ENCODE measurements at regions of chr10 and their contacts with region 1.

Region 1: GRCh38 chr10:113126229-113127201 is 176.5 kb downstream of the TCF7L2 start:
- DNase-seq: no peak
- H3K4me3 ChIP-seq: peak overlapping the region; percentile 47
- CTCF ChIP-seq: peak; percentile 58

Region 2: DNA sequence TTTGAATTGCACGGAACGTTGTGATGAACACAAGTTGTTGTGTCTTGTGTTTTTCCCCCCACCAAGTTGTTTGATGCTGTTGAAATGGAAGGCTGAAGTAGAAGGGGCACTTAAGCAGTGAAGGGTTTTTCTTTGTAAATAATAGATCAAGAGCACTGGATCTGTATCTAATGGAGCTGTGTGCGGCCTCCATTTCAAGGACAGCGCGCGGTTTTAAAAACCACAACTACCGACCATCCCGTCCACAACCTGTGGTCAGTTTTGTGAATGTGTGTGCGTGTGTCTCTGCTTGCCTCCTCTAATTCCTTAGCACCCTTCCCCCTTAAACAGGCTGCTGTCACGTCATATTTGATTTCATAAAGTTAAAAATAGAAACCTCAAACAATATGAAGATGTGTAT is 11.0 kb before region 1 on chr10:
- CTCF ChIA-PET with region 1: interaction called, 10 read pairs
- POLR2A ChIA-PET with region 1: no interaction called
- DNase-seq: no peak
- H3K4me3 ChIP-seq: no peak overlapping the region
- CTCF ChIP-seq: no peak

Region 3: GRCh38 chr10:113187063-113187777 is 60.7 kb after region 1 on chr10:
- CTCF ChIA-PET with region 1: no interaction called
- POLR2A ChIA-PET with region 1: no interaction called
- DNase-seq: no peak
- H3K4me3 ChIP-seq: no peak overlapping the region
- CTCF ChIP-seq: no peak

Measured in AG04449 (cell line).